ENCODE measurements at regions of chr7 and their contacts with region 1.

Region 1: DNA sequence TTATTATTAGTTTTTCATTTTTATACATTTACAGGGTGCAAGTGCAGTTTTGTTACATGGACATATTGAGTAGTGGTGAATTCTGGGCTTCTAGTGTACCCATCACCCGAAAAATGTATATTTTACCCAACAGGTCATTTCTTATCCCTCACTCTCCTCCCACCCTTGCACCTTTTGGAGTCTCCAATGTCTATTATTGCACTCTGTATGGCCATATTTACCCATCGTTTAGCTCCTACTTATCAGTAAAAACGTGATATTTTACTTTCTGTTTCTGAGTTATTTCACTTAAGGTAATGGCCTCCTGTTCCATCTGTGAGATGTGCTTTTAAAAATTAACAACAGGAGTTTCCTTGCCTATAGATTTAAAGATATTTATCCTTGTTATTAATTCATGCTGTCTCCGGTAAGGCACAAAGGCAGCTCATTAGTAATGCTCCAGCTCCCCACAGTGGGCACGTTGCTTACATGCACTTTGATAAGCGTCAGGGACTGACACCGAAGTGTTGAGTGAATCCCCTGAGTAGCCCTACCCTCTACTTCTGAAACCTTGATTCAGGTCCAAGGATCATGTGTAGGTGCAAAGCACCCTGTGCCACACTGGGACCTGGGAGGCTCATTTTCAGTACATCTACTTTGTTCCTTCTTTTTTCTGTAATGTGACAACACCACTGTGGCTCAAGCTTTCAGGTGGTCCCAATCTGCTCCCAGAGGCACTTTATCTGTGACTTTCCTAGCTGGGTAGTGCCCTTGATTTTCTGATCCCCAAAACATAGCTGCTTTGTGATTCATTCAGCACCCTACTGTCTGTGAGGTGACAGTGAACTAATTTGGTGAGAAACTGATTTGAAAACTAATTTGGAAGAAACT is 27.3 kb downstream of the HYAL4 start:
- DNase-seq: peak; percentile 68
- H3K4me3 Mint-ChIP-seq: no peak overlapping the region
- H3K27ac Mint-ChIP-seq: no peak overlapping the region
- H3K4me1 Mint-ChIP-seq: peaks cover 23% of the 10 kb centered on the region
- H3K27me3 Mint-ChIP-seq: no peaks in the 10 kb centered on the region
- CTCF ChIP-seq: peak; percentile 52

Region 2: DNA sequence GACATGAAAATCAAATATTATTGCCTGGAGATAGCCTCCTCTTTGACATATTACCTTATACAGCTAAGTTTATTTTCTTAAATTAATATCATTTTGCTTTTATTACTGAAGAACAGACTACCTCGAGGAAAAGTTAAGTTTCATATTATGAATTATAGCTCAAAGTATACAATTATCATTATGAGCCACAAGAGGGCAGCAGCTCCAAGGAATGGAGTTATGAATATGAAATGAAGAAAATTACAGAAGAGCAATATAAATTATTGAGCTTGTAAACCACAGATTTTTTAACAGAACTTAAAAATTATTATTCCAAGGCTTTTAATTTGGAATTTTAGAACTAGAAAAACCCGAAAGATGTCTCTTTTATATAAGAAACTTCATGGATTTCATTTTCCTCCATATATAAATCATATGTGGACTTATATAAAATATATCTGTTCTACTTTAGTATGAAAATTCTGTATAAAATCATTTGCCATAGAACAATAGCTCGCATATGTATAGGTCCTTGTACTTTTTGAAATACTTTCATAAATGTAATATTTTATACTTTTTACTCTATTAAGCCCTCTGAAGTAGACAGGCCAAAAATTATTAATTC is 377.9 kb before region 1 on chr7:
- CTCF ChIA-PET with region 1: interaction called, 11 read pairs
- intact Hi-C with region 1: loop called (anchors 2 kb)
- DNase-seq: peak; percentile 10
- H3K4me3 Mint-ChIP-seq: no peak overlapping the region
- H3K27ac Mint-ChIP-seq: no peak overlapping the region
- H3K4me1 Mint-ChIP-seq: no peaks in the 10 kb centered on the region
- H3K27me3 Mint-ChIP-seq: peaks cover 19% of the 10 kb centered on the region
- CTCF ChIP-seq: peak; percentile 23

Region 3: DNA sequence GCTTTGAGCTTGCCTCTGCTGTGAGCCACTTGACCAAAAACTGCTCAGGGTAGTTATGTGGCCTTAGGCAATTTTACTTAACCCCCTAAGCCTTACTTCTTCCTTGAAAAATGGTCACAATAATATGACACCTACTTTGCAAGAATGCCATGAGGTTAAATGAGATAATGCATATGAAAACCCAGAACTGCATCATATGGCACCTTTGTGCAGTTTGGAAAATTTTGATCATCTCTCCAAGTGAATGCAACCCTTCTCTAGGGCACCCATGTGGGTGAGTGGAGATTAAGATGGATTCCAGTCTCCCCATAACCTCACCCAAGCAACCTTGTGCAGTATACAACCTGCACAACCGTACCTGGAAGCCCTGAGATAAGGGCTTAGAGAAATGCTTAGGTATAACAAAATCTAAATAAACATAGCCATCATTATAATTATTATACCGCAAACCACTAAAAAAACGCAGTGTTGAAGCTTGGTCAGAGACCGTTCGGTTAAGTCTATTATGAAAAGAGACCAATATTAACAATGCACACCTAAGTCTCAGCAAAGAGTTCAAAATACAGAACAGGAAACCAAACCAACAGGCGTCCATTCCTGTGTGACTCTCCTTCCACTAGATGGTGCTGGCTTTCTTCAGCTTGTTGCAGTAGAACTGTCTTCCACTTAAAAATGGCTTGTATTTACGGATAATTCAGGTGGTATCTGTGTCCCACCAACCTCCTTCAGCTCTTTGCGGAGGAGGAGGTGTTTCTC is 291.6 kb before region 1 on chr7:
- CTCF ChIA-PET with region 1: no interaction called
- intact Hi-C with region 1: loop called (anchors 2 kb)
- DNase-seq: peak; percentile 40
- H3K4me3 Mint-ChIP-seq: no peak overlapping the region
- H3K27ac Mint-ChIP-seq: no peak overlapping the region
- H3K4me1 Mint-ChIP-seq: peaks cover 8% of the 10 kb centered on the region
- H3K27me3 Mint-ChIP-seq: no peaks in the 10 kb centered on the region
- CTCF ChIP-seq: peak; percentile 68

Region 4: DNA sequence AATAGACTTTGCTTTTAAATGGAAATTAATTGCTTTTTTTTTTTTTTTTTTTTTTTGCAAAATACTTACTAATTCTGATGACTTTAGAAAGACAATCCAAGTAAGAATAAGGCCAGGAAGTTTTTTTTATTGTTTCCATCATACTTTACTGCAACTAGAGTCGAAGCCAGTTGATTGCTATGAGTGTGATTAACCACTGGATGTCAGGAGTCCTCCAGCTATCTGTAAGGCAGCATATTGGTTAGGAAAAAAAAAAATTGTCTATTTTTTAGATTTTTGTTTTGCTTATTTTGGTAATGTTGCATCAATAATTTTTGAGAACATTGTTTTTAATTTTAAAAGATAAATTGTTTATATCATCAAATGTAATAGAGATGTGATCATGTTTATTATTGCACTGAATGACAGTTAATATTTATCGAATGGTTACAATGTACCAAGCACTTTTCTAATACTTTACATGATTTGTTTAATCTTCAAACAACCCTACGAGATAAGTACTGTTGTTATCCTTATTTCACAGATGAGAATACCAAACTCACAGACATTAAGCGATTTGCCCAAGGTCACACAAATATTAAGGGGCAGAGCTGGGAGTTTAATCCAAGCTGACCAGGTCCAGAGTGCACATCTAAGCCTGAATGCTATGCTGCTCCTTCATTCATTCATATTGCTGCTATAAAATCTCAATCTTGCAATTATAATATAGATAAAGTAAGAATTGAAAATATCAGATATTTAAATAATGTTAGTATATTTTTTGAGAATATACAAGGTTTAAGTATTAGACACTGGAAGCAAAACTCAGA is 236.5 kb before region 1 on chr7:
- CTCF ChIA-PET with region 1: interaction called, 5 read pairs
- intact Hi-C with region 1: loop called (anchors 1 kb)
- DNase-seq: no peak
- H3K4me3 Mint-ChIP-seq: no peak overlapping the region
- H3K27ac Mint-ChIP-seq: no peak overlapping the region
- H3K4me1 Mint-ChIP-seq: peaks cover 8% of the 10 kb centered on the region
- H3K27me3 Mint-ChIP-seq: no peaks in the 10 kb centered on the region
- CTCF ChIP-seq: peak; percentile 35

Region 5: DNA sequence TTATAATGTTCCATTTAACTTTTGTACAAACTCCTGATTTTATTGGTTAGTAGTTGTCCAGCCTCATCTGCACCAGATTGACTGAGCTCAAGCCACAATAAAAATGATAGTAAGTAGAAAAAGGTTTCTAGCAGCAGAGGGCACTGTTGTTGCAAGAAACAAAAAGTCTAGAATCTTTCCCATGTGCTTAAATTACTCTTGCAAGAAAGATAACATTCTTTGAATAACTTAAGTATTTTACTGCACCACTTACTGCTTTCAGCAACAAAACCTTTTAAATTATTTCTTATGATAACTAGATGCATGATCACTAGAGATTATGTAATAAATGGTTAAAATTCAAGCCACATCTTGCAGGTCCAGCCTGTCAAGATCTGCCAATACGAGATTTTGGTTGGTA is 189.5 kb before region 1 on chr7:
- CTCF ChIA-PET with region 1: interaction called, 9 read pairs
- intact Hi-C with region 1: loop called (anchors 1 kb)
- DNase-seq: peak; percentile 24
- H3K4me3 Mint-ChIP-seq: no peak overlapping the region
- H3K27ac Mint-ChIP-seq: no peak overlapping the region
- H3K4me1 Mint-ChIP-seq: no peaks in the 10 kb centered on the region
- H3K27me3 Mint-ChIP-seq: no peaks in the 10 kb centered on the region
- CTCF ChIP-seq: peak; percentile 21